ENCODE measurements at regions of chr6 and their contacts with region 1.

Region 1: DNA sequence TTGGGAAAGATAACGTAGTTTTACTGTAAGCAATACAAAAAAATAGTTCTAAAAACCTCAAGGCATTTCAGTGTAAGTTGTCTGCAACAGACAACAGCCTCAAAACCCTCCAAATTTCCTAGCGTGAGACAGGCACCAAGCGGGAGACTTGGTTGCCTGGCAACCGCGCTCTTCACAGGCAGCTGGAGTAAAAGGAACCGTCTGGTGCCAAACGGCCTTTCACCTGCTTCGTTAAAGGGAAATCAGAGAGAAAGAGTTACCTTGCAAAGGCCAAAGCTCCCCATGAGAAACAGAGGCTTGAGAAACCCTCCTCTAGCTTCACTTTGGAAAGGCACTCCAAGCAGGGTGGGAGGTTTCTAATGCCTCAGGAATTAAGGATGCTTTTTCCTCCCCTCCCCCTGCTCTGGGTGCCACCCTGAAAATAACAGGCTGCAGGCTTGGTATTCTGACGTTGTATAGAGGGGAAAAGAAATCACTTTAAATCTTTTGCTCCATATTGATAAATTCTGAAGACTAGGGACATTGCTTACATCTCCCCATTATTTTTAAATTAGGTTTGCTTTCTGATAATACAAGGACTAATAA is 129.7 kb upstream of the UFL1 start:
- DNase-seq: no peak
- ATAC-seq: no peak
- H3K4me3 ChIP-seq: no peak overlapping the region
- H3K27ac ChIP-seq: no peak overlapping the region
- H3K4me1 ChIP-seq: no peaks in the 10 kb centered on the region
- H3K27me3 ChIP-seq: no peaks in the 10 kb centered on the region
- CTCF ChIP-seq: no peak

Region 2: DNA sequence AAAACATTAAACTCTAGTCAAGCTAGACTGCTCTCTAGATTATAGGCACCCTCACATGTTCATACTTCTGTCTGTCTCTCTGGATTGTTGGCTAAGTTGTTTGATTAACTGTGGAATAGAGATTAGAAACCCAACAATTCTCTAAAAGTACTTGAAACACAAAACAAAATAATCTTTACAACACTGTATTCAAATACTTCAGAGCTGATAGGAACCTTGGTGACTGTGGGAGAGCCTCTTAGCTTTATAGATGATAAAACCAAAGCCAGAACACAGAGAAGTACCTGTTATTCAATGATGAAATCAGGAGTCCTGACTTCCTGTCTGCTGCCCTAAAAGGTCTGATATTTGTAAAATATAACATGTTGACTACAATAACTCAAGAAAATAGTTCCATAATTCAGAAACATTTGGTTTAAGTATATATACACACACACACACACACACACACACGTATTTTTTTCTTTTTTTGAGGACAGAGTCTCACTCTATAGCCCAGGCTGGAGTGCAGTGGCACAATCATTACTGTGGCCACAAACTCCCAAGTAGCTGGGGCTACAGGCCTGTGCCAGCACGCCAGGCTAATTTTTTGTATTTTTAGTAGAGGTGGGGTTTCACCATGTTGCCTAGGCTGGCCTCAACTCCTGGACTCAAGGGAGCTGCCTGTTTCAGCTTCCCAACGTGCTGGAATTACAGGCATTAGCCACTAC is 154.1 kb before region 1 on chr6:
- CTCF ChIA-PET with region 1: no interaction called
- POLR2A ChIA-PET with region 1: interaction called, 10 read pairs
- in situ Hi-C with region 1: no loop called
- intact Hi-C with region 1: no loop called
- DNase-seq: no peak
- ATAC-seq: no peak
- H3K4me3 ChIP-seq: no peak overlapping the region
- H3K27ac ChIP-seq: no peak overlapping the region
- H3K4me1 ChIP-seq: no peaks in the 10 kb centered on the region
- H3K27me3 ChIP-seq: no peaks in the 10 kb centered on the region
- CTCF ChIP-seq: no peak

Region 3: DNA sequence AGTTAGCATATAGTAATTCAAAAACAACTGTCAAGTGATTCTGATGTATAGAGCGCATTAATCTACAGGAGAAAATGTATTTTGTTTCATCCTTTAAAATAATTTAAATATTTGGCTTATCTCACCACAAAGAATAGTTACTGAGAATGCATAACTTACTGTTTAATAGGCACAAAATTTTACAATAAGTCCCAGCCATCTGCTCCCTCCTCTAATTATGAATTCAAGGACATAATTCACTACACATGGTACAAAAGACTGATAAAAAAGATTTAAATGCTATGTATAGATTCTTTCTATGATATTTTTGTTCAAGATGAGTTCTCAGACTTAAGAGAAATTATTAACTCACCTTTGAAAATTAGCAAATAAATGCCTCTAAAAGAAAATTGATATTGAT is 134.1 kb before region 1 on chr6:
- CTCF ChIA-PET with region 1: no interaction called
- POLR2A ChIA-PET with region 1: no interaction called
- in situ Hi-C with region 1: no loop called
- intact Hi-C with region 1: no loop called
- DNase-seq: no peak
- ATAC-seq: no peak
- H3K4me3 ChIP-seq: no peak overlapping the region
- H3K27ac ChIP-seq: no peak overlapping the region
- H3K4me1 ChIP-seq: no peaks in the 10 kb centered on the region
- H3K27me3 ChIP-seq: no peaks in the 10 kb centered on the region
- CTCF ChIP-seq: no peak

Measured in Panc1 (cell line).